Right ventricle myocardium inferior (tissue), 1 donor: ENCODE measurements at regions of chr18 and their contacts with region 1.

Region 1: GRCh38 chr18:58043491-58044379 is at the start of gene NEDD4L:
- DNase-seq: peak; percentile 92
- ATAC-seq: peak; percentile 91
- total RNA-seq, gene NEDD4L: 55.9 TPM

Region 2: GRCh38 chr18:58117786-58118403 is 74.2 kb after region 1 on chr18:
- intact Hi-C with region 1: loop called (anchors 1 kb)
- DNase-seq: no peak
- ATAC-seq: no peak

Region 3: GRCh38 chr18:58135701-58136331 is 92.1 kb after region 1 on chr18:
- intact Hi-C with region 1: loop called (anchors 5 kb)
- DNase-seq: no peak
- ATAC-seq: peak; percentile 56

Region 4: GRCh38 chr18:58321986-58322385 is 278.3 kb after region 1 on chr18:
- intact Hi-C with region 1: loop called (anchors 5 kb)
- DNase-seq: no peak
- ATAC-seq: peak; percentile 92